ENCODE measurements at regions of chr17 and their contacts with region 1.

Region 1: GRCh38 chr17:17141860-17142552 is 64.1 kb downstream of the PLD6 start:
- DNase-seq: peak; percentile 78
- H3K4me3 ChIP-seq: no peak overlapping the region
- H3K27ac ChIP-seq: peak overlapping the region in 2 of 4 donors; percentile 40 to 61
- H3K4me1 ChIP-seq: peaks cover 0 to 13% (median 9%) of the 10 kb centered on the region in 4 donors
- H3K27me3 ChIP-seq: no peaks in the 10 kb centered on the region
- CTCF ChIP-seq: peak; percentile 78 to 89 (median 86)
- EP300 ChIP-seq: no peak
- POLR2A ChIP-seq: no peak

Region 2: DNA sequence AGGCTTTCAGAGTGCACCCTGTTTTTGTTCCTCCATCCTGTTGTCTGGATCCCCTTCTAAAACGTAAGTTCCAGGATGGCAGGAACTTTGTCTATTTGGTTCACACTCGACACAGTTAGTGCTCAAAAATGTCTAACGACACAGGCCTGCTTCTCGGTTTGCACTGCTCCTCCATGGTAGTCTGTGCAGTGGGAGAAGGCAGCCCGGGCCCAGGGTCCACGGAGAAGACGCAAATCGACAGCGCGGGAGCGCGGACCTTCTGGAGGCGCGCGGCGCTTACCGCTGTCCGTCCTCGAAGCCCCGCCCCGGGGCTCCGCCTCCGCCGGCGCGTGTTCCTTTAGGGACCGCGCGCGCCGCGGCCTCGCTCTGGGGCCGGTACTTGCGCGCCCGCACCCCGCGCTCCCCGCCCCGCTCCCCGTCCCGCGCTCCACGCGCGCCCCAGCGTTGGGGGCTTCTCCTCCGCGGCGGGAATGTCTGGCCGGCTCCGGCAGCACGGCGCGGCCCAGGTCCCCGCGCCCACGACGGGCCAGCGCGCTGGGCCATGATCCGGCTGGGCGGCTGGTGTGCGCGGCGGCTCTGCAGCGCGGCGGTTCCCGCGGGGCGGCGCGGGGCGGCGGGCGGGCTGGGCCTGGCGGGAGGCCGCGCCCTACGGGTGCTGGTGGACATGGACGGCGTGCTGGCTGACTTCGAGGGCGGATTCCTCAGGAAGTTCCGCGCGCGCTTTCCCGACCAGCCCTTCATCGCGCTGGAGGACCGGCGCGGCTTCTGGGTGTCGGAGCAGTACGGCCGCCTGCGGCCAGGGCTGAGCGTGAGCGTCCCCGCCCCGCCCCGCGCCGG is 161.2 kb after region 1 on chr17 and contains the start of gene NT5M:
- intact Hi-C with region 1: loop called (anchors 10 kb)
- DNase-seq: peak; percentile 85
- H3K4me3 ChIP-seq: peak within 1 kb of the TSS; percentile 25 to 68 (median 62)
- H3K27ac ChIP-seq: peak within 1 kb of the TSS; percentile 72 to 82 (median 80)
- H3K4me1 ChIP-seq: peaks cover 0 to 27% (median 14%) of the 10 kb centered on the region in 4 donors
- H3K27me3 ChIP-seq: no peaks in the 10 kb centered on the region
- CTCF ChIP-seq: no peak
- EP300 ChIP-seq: no peak
- POLR2A ChIP-seq: no peak
- total RNA-seq, gene NT5M: 4.3 to 5.8 (median 5.5) TPM